K562 (cell line): ENCODE measurements at regions of chr5 and their contacts with region 1.

Region 1: GRCh38 chr5:172770675-172771438 is at the start of gene DUSP1:
- DNase-seq: peak; percentile 97 to 99 (median 98)
- ATAC-seq: peak; percentile 82
- H3K4me3 ChIP-seq: peak within 1 kb of the TSS; percentile 84
- H3K27ac ChIP-seq: peak within 1 kb of the TSS; percentile 99
- H3K4me1 ChIP-seq: peaks cover 46 to 58% of the 10 kb centered on the region in 2 experiments
- H3K27me3 ChIP-seq: no peaks in the 10 kb centered on the region
- CTCF ChIP-seq: peak; percentile 72 to 98 (median 89)
- EP300 ChIP-seq: 0 out of 2 replicates have a peak, but pooled peaks have one; percentile 10
- POLR2A ChIP-seq: peak; percentile 99
- RAD21 ChIP-seq: peak; percentile 80 to 86
- polyA plus RNA-seq, gene DUSP1: 2.1 to 3.0 TPM

Region 2: GRCh38 chr5:172749881-172750633 is 20.8 kb before region 1 on chr5:
- CTCF ChIA-PET with region 1: no interaction called
- POLR2A ChIA-PET with region 1: interaction called, 10 read pairs
- in situ Hi-C with region 1: no loop called
- intact Hi-C with region 1: no loop called
- DNase-seq: no peak
- ATAC-seq: no peak
- H3K4me3 ChIP-seq: no peak overlapping the region
- H3K27ac ChIP-seq: no peak overlapping the region
- H3K4me1 ChIP-seq: peaks cover 0 to 10% of the 10 kb centered on the region in 2 experiments; a peak in 2 of 5 replicates
- H3K27me3 ChIP-seq: peaks cover 41% of the 10 kb centered on the region in 2 experiments
- CTCF ChIP-seq: no peak
- EP300 ChIP-seq: no peak
- POLR2A ChIP-seq: no peak
- RAD21 ChIP-seq: no peak

Region 3: DNA sequence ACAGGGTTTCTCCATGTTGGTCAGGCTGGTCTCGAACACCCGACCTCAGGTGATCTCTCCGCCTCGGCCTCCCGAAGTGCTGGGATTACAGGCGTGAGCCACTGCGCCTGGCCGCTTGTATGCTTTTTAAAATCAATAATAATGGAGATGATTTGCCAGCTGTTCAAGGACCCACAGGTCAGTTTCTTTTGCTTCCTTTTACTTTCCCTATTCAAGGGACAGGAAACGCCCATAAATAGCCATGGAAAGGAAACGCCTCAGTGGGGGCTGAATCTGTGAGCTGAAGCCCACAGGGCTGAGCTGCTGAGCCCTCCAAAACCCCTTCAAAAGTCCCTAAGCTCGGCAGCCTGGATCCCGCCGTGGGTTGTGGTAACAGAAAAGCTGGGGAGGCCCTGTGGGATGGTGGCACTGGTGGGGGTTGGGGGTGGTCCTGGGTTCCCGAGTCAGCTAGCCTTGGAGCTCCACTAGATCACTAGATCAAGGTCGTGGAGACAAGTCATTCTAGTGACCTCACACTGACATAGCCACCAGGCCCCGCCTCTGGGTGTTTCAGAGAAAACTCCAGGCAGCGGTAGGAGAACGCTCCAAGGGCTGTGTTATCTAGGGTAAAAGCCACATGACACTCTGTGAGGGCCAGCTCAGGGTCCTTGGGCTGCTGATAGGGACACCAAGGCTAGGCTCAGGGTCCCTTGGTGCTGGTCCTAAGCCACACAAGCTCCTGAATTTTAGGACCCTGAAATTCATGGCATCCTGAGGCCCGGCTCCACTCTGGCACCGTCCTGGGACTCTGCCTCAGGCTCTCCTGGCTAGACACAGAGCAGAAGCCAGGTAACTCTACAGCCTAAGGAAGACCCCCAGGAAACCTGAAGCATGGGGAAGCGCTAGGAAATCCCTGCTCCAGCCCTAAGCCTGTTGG is 18.2 kb after region 1 on chr5:
- CTCF ChIA-PET with region 1: interaction called, 3 read pairs
- POLR2A ChIA-PET with region 1: interaction called, 51 read pairs
- in situ Hi-C with region 1: no loop called
- intact Hi-C with region 1: loop called (anchors 1 kb)
- DNase-seq: peak; percentile 84 to 95 (median 88)
- ATAC-seq: peak; percentile 97
- H3K4me3 ChIP-seq: peak overlapping the region; percentile 17
- H3K27ac ChIP-seq: peak overlapping the region; percentile 98
- H3K4me1 ChIP-seq: peaks cover 36 to 40% of the 10 kb centered on the region in 2 experiments
- H3K27me3 ChIP-seq: no peaks in the 10 kb centered on the region
- CTCF ChIP-seq: no peak; a peak in 1 of 6 replicates
- EP300 ChIP-seq: peak; percentile 46; the same call in 1 of the 2 replicates
- POLR2A ChIP-seq: peak; percentile 74
- RAD21 ChIP-seq: peak; percentile 14 to 18; a peak in 3 of 4 replicates

Region 4: GRCh38 chr5:172816901-172817564 is 46.2 kb after region 1 on chr5:
- CTCF ChIA-PET with region 1: no interaction called
- POLR2A ChIA-PET with region 1: interaction called, 13 read pairs
- in situ Hi-C with region 1: no loop called
- intact Hi-C with region 1: no loop called
- DNase-seq: peak; percentile 52 to 69 (median 66)
- ATAC-seq: peak; percentile 84
- H3K4me3 ChIP-seq: no peak overlapping the region
- H3K27ac ChIP-seq: no peak overlapping the region
- H3K4me1 ChIP-seq: peaks cover 6 to 23% of the 10 kb centered on the region in 2 experiments; a peak in 4 of 5 replicates
- H3K27me3 ChIP-seq: no peaks in the 10 kb centered on the region
- CTCF ChIP-seq: 0 out of 6 replicates have a peak, but pooled peaks of 1 of the 3 experiments have one; percentile 7
- EP300 ChIP-seq: no peak
- POLR2A ChIP-seq: no peak
- RAD21 ChIP-seq: no peak

Region 5: DNA sequence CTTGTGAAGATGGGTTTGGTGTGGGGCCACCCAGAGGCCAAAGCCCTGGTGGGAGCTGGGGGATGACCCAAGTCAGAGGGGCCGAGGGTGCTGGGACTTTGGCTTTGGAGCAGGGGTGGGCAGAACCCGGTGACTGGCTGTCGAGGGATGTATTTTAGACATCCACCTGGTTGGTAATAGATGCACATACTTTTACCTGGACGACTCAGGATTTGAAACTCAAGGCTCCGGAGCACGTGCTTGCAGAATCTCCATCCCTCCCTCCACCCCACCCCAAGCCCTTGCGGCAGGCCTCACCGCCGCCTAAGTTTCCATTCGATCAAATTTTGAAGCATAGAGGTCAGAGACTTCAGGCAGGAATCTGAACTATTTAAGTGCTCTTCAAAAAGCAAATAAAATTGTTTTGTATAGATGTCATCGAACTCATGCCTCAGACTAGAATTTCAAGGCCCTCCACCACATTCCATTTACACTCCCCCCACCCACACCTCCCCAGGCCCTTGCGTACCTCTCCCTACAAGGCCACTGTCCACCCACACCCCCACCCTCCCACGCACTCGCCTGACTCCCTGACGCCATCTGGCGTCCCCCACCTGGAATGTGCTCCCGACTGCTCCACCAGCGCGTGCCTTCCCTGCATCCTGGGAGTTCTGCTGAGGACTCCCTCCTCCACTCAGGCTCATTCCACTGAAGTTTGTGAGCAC is 131.8 kb after region 1 on chr5:
- CTCF ChIA-PET with region 1: interaction called, 15 read pairs
- POLR2A ChIA-PET with region 1: interaction called, 42 read pairs
- in situ Hi-C with region 1: no loop called
- intact Hi-C with region 1: loop called (anchors 2 kb)
- DNase-seq: peak; percentile 76 to 86 (median 84)
- ATAC-seq: peak; percentile 81
- H3K4me3 ChIP-seq: no peak overlapping the region
- H3K27ac ChIP-seq: peak overlapping the region; percentile 79; the same call in 2 of the 3 replicates
- H3K4me1 ChIP-seq: peaks cover 26 to 36% of the 10 kb centered on the region in 2 experiments
- H3K27me3 ChIP-seq: no peaks in the 10 kb centered on the region
- CTCF ChIP-seq: peak; percentile 75 to 89 (median 79)
- EP300 ChIP-seq: no peak
- POLR2A ChIP-seq: no peak
- RAD21 ChIP-seq: peak; percentile 77 to 79

Region 6: DNA sequence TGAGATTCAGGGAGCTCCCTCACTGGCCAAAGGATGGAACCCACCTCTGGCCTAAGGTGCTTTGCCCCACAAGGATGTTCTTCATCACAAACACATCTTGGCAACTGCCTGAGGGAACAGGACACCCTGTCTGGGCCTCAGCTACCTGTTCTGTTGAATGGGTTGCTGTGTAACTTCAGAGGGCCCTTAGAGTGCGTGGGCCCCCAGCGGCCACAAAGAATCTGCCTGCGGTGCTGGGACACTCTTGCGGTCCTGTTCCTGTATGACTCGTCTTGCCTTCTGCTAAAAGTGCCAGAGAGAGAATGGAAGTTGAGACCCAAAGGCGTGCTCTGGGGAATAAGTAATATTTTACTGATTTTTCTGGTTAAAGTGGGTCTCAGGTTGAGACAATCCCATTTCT is 174.3 kb after region 1 on chr5:
- CTCF ChIA-PET with region 1: no interaction called
- POLR2A ChIA-PET with region 1: no interaction called
- in situ Hi-C with region 1: no loop called
- intact Hi-C with region 1: no loop called
- DNase-seq: no peak
- ATAC-seq: no peak
- H3K4me3 ChIP-seq: no peak overlapping the region
- H3K27ac ChIP-seq: no peak overlapping the region
- H3K4me1 ChIP-seq: peaks cover 7 to 12% of the 10 kb centered on the region in 2 experiments
- H3K27me3 ChIP-seq: no peaks in the 10 kb centered on the region
- CTCF ChIP-seq: no peak
- EP300 ChIP-seq: no peak
- POLR2A ChIP-seq: no peak
- RAD21 ChIP-seq: no peak